Caco-2 (cell line): ENCODE measurements at regions of chr9 and their contacts with region 1.

Region 1: GRCh38 chr9:137665697-137666510 is 47.1 kb downstream of the EHMT1 start:
- DNase-seq: no peak
- H3K4me3 ChIP-seq: no peak overlapping the region
- H3K4me3 Mint-ChIP-seq: no peak overlapping the region
- H3K27ac Mint-ChIP-seq: no peak overlapping the region
- H3K4me1 ChIP-seq: no peaks in the 10 kb centered on the region
- H3K4me1 Mint-ChIP-seq: peaks cover 23% of the 10 kb centered on the region
- H3K27me3 ChIP-seq: no peaks in the 10 kb centered on the region
- H3K27me3 Mint-ChIP-seq: no peaks in the 10 kb centered on the region
- CTCF ChIP-seq: no peak

Region 2: GRCh38 chr9:137689745-137690529 is 24.0 kb after region 1 on chr9:
- CTCF ChIA-PET with region 1: interaction called, 10 read pairs
- POLR2A ChIA-PET with region 1: no interaction called
- intact Hi-C with region 1: no loop called
- DNase-seq: peak in 1 of 2 experiments; percentile 61
- H3K4me3 ChIP-seq: no peak overlapping the region
- H3K4me3 Mint-ChIP-seq: no peak overlapping the region
- H3K27ac Mint-ChIP-seq: peak overlapping the region; percentile 32
- H3K4me1 ChIP-seq: no peaks in the 10 kb centered on the region
- H3K4me1 Mint-ChIP-seq: peaks cover 18% of the 10 kb centered on the region
- H3K27me3 ChIP-seq: no peaks in the 10 kb centered on the region
- H3K27me3 Mint-ChIP-seq: no peaks in the 10 kb centered on the region
- CTCF ChIP-seq: no peak

Region 3: GRCh38 chr9:138082918-138083636 is 417.2 kb after region 1 on chr9:
- CTCF ChIA-PET with region 1: no interaction called
- POLR2A ChIA-PET with region 1: no interaction called
- intact Hi-C with region 1: no loop called
- DNase-seq: peak in 1 of 2 experiments; percentile 12
- H3K4me3 ChIP-seq: no peak overlapping the region
- H3K4me3 Mint-ChIP-seq: no peak overlapping the region
- H3K27ac Mint-ChIP-seq: no peak overlapping the region
- H3K4me1 ChIP-seq: no peaks in the 10 kb centered on the region
- H3K4me1 Mint-ChIP-seq: no peaks in the 10 kb centered on the region
- H3K27me3 ChIP-seq: no peaks in the 10 kb centered on the region; the same call in 1 of the 2 replicates
- H3K27me3 Mint-ChIP-seq: peaks cover 17% of the 10 kb centered on the region
- CTCF ChIP-seq: no peak